ENCODE measurements at regions of chr11 and their contacts with region 1.

Region 1: GRCh38 chr11:88770475-88771079 is 295.2 kb downstream of the GRM5 start:
- DNase-seq: no peak
- H3K4me3 ChIP-seq: no peak overlapping the region
- H3K27ac ChIP-seq: no peak overlapping the region
- H3K4me1 ChIP-seq: no peaks in the 10 kb centered on the region
- H3K27me3 ChIP-seq: no peaks in the 10 kb centered on the region
- CTCF ChIP-seq: no peak

Region 2: GRCh38 chr11:88695689-88696414 is 74.7 kb before region 1 on chr11:
- intact Hi-C with region 1: loop called (anchors 2 kb)
- DNase-seq: no peak
- H3K4me3 ChIP-seq: no peak overlapping the region
- H3K27ac ChIP-seq: no peak overlapping the region
- H3K4me1 ChIP-seq: no peaks in the 10 kb centered on the region
- H3K27me3 ChIP-seq: peaks cover 8% of the 10 kb centered on the region
- CTCF ChIP-seq: no peak

Measured in left ventricle myocardium inferior (tissue), 1 donor.